Heart left ventricle (tissue), 16 donors: ENCODE measurements at regions of chrX and their contacts with region 1.

Region 1: DNA sequence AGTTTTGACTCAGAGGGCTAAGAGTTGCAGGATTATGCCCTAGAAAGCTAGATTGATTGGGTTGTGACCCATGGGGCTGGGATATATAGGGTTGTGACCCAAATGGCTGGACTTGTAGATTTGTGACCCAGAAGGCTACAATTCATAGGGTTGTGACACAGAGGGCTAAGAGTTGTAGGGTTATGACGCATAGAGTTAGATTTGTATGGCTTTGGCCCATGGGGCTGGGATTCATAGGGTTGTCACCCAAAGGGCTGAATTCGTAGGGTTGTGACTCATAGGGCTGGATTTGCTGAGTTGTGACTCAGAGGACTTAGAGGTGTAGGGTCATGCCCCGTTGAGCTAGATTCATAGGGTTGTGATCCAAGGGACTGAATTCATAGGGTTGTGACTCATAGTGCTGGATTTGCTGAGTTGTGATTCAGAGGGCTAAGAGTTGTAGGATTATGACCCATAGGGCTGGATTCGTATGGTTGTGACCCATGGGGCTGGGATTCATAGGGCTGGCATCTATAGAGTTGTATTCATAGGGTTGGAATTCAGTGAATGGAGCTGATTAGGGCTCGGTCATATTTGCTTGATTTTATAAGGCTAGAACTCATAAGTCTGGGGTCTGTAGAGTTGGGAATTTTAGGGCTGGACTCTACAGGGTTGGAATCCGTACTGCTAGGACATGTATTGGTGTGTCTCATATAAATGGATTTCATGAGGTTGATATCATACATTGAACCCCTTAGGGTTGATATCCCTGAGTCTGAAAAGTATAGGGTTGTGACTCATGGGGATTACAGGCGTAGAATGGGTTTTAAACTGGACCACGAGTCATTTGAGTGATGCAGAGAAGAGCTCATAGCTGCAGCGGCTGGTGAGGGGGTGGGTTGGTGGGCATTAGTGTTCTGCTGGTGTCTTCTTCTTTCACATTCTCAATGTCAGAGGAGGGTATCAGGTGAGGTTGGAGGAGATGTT is 125.7 kb downstream of the CRLF2 start:
- DNase-seq: no peak
- ATAC-seq: no peak
- H3K4me3 ChIP-seq: no peak overlapping the region
- H3K27ac ChIP-seq: no peak overlapping the region
- H3K4me1 ChIP-seq: no peaks in the 10 kb centered on the region
- H3K27me3 ChIP-seq: peaks cover 0 to 2% (median 0%) of the 10 kb centered on the region in 9 donors
- CTCF ChIP-seq: no peak
- POLR2A ChIP-seq: no peak

Region 2: GRCh38 chrX:555725-556666 is 530.7 kb before region 1 on chrX:
- intact Hi-C with region 1: no loop called
- DNase-seq: no peak
- ATAC-seq: no peak
- H3K4me3 ChIP-seq: no peak overlapping the region
- H3K27ac ChIP-seq: no peak overlapping the region
- H3K4me1 ChIP-seq: no peaks in the 10 kb centered on the region
- H3K27me3 ChIP-seq: no peaks in the 10 kb centered on the region
- CTCF ChIP-seq: no peak
- POLR2A ChIP-seq: no peak

Region 3: DNA sequence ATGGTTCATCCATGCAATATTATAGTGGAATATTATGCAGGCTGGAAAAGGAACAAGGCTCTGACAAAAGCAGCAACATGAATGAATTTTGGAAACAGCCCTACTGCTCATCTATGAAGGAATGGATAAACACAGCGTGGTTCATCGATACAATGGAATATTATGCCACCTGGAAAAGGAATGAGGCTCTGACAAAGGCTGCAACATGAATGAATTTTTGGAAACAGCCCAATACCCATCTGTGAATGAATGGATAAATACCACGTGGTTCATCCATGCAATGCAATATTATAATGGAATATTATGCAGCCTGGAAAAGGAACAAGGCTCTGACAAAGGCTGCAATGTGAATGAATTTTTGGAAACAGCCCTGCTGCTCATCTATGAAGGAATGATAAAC is 34.7 kb before region 1 on chrX:
- intact Hi-C with region 1: no loop called
- DNase-seq: no peak
- ATAC-seq: no peak
- H3K4me3 ChIP-seq: no peak overlapping the region
- H3K27ac ChIP-seq: no peak overlapping the region
- H3K4me1 ChIP-seq: no peaks in the 10 kb centered on the region
- H3K27me3 ChIP-seq: no peaks in the 10 kb centered on the region
- CTCF ChIP-seq: no peak
- POLR2A ChIP-seq: no peak

Region 4: DNA sequence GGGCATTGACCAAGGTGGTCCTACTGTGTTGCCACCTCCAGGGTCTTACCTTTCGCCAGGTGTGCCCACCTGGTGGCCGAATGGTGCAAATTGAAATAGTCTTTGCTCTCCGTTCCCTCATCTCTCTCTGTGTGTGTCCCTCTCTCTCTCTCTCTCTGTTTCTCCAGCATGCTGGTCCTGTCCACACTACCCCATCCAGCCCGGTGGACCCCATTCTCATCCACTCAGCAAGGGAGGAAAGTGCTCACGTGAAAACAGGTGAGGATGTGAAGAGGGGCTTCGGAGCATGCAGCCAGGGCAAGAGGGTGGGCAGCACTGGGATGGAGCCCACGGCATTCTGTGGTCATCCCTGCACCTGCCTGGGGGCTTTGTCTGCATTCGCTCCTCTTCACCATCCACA is 24.4 kb before region 1 on chrX:
- intact Hi-C with region 1: loop called in 1 of 10 experiments (anchors 1 kb)
- DNase-seq: no peak
- ATAC-seq: no peak
- H3K4me3 ChIP-seq: no peak overlapping the region
- H3K27ac ChIP-seq: no peak overlapping the region
- H3K4me1 ChIP-seq: no peaks in the 10 kb centered on the region
- H3K27me3 ChIP-seq: no peaks in the 10 kb centered on the region
- CTCF ChIP-seq: no peak
- POLR2A ChIP-seq: no peak